ENCODE measurements at regions of chr4 and their contacts with region 1.

Region 1: GRCh38 chr4:102344954-102345794 is at the start of gene SLC39A8:
- DNase-seq: peak; percentile 96
- H3K4me3 Mint-ChIP-seq: peak within 1 kb of the TSS; percentile 88
- H3K27ac Mint-ChIP-seq: peak within 1 kb of the TSS; percentile 99
- H3K4me1 Mint-ChIP-seq: peaks cover 39% of the 10 kb centered on the region
- H3K27me3 Mint-ChIP-seq: peaks cover 7% of the 10 kb centered on the region
- total RNA-seq, gene SLC39A8: 80.4 and 81.2 TPM in 2 replicates

Region 2: DNA sequence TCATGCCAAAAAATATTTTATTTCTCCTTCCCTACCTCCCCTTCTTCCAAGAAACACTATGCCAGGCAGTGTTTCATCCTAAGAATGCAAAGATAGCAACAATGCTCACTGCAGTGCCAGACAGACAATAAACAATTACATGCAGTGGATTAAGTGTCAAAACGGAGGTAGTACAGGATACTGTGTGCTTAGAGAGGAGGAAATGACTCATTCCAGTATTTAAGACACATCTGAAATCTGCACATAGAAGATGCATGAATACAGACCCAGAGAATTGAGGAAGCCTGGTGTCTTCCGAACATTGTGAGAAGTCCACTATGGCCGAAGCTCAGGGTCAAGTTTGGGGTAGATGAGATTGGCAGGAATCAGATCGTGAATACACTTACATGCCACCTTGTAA is 1324.2 kb before region 1 on chr4:
- intact Hi-C with region 1: loop called (anchors 10 kb)
- DNase-seq: peak; percentile 77
- H3K4me3 Mint-ChIP-seq: peak overlapping the region; percentile 66
- H3K27ac Mint-ChIP-seq: peak overlapping the region; percentile 82
- H3K4me1 Mint-ChIP-seq: peaks cover 42% of the 10 kb centered on the region
- H3K27me3 Mint-ChIP-seq: no peaks in the 10 kb centered on the region

Region 3: GRCh38 chr4:102263011-102263787 is 82.0 kb before region 1 on chr4:
- intact Hi-C with region 1: loop called (anchors 2 kb)
- DNase-seq: peak; percentile 70
- H3K4me3 Mint-ChIP-seq: no peak overlapping the region
- H3K27ac Mint-ChIP-seq: no peak overlapping the region
- H3K4me1 Mint-ChIP-seq: peaks cover 11% of the 10 kb centered on the region
- H3K27me3 Mint-ChIP-seq: no peaks in the 10 kb centered on the region

Region 4: DNA sequence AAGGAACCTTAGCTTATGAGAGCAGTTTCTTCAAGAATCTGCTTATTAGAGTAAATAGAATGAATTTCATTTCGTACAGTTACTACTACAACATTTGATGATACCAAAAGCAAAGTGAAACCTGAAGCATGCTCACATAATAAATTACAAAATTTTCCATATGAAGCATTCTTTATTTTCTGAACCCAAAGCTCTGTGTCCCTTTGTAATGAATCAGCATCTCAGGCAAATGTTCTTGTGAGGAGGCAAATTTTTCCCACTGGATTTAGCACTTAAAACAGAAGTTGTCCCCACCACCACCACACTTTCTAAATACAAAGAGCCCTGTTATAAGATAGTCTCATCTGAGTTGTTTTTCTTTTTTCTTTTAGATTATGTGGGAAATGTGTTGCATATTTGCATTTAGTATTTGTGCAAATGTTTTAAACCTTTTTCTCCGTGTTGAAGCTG is 85.3 kb after region 1 on chr4:
- intact Hi-C with region 1: loop called (anchors 1 kb)
- DNase-seq: peak; percentile 54
- H3K4me3 Mint-ChIP-seq: peak overlapping the region; percentile 90
- H3K27ac Mint-ChIP-seq: peak overlapping the region; percentile 88
- H3K4me1 Mint-ChIP-seq: peaks cover 14% of the 10 kb centered on the region
- H3K27me3 Mint-ChIP-seq: peaks cover 8% of the 10 kb centered on the region

Region 5: DNA sequence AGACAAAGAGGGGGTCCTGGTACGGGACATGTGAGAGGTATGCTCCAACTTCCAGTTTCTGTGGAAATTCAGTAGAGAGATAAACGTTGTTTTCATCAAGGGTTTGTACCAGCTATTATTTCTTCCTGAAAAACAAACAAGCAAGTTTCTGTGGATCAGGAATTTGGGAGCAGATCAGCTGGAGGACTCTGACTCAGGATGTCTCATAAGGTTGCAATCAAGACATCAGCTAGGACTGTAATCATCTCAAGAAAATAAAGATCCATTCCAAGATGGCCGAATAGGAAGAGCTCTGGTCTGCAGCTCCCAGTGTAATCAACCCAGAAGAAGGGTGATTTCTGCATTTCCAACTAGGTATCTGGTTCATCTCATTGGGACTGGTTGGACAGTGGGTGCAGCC is 132.5 kb after region 1 on chr4:
- intact Hi-C with region 1: no loop called
- DNase-seq: no peak
- H3K4me3 Mint-ChIP-seq: no peak overlapping the region
- H3K27ac Mint-ChIP-seq: no peak overlapping the region
- H3K4me1 Mint-ChIP-seq: no peaks in the 10 kb centered on the region
- H3K27me3 Mint-ChIP-seq: no peaks in the 10 kb centered on the region

Region 6: GRCh38 chr4:102518703-102519131 is 173.5 kb after region 1 on chr4:
- intact Hi-C with region 1: no loop called
- DNase-seq: no peak
- H3K4me3 Mint-ChIP-seq: peak overlapping the region; percentile 35
- H3K27ac Mint-ChIP-seq: peak overlapping the region; percentile 30
- H3K4me1 Mint-ChIP-seq: peaks cover 61% of the 10 kb centered on the region
- H3K27me3 Mint-ChIP-seq: no peaks in the 10 kb centered on the region

Region 7: DNA sequence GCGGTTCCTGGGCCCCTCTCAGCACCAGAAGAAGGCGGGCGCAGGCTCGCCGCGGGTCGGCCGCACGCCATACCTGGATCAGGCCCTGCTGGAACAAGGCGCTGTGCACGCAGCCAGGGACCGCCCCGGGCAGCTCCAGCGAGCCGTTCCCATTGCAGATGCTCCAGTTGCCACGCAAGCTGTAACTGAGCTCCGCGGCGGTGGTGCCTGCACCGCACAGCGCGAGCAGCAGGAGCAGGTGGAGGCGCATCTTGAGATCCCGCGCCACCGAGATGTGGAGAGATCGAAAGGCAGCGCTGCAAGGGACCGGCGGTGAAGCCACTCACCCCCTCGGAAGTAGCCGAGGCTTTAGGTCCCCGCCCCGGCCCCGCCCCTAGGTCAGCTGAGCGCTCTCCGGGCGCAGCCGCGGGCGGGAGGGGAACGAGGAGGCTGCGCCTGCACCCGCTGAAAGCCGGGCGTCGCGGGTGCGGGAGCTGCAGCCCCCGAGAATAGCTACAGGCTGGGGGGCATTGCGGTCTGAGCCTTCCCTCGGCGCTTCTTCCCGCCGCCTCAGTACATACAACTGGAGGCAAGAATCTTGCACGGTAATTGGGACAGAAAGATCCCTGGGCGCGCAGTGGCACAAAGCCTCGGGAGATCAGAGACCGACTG is 415.6 kb after region 1 on chr4 and contains the start of gene MANBA:
- intact Hi-C with region 1: loop called (anchors 2 kb)
- DNase-seq: peak; percentile 94
- H3K4me3 Mint-ChIP-seq: peak within 1 kb of the TSS; percentile 88
- H3K27ac Mint-ChIP-seq: peak within 1 kb of the TSS; percentile 87
- H3K4me1 Mint-ChIP-seq: peaks cover 28% of the 10 kb centered on the region
- H3K27me3 Mint-ChIP-seq: peaks cover 13% of the 10 kb centered on the region
- total RNA-seq, gene MANBA: 8.2 and 9.4 TPM in 2 replicates

Region 8: GRCh38 chr4:103019308-103020124 is 674.3 kb after region 1 on chr4 and contains the start of gene SLC9B1:
- intact Hi-C with region 1: loop called (anchors 2 kb)
- DNase-seq: peak; percentile 98
- H3K4me3 Mint-ChIP-seq: peak within 1 kb of the TSS; percentile 93
- H3K27ac Mint-ChIP-seq: peak within 1 kb of the TSS; percentile 94
- H3K4me1 Mint-ChIP-seq: peaks cover 22% of the 10 kb centered on the region
- H3K27me3 Mint-ChIP-seq: no peaks in the 10 kb centered on the region
- total RNA-seq, gene SLC9B1: 0.23 and 0.47 TPM in 2 replicates